Activated T-helper 2 cell treated with anti-CD3 and anti-CD28 coated beads, Interferon-gamma antibody, Interleukin-2, Interleukin-4, amounts not matched to agents 10 μg/mL and 5 μg/mL and 100 μg/mL, durations not matched to agents 14 hours and 24 hours and 36 hours (primary cell): ENCODE measurements at regions of chr11 and their contacts with region 1.

Region 1: GRCh38 chr11:59849129-59849528 is 3.8 kb upstream of the CBLIF start:
- DNase-seq: no peak
- H3K4me3 Mint-ChIP-seq: no peak overlapping the region
- H3K27ac Mint-ChIP-seq: no peak overlapping the region
- H3K4me1 Mint-ChIP-seq: peaks cover 5% of the 10 kb centered on the region
- H3K27me3 Mint-ChIP-seq: no peaks in the 10 kb centered on the region

Region 2: DNA sequence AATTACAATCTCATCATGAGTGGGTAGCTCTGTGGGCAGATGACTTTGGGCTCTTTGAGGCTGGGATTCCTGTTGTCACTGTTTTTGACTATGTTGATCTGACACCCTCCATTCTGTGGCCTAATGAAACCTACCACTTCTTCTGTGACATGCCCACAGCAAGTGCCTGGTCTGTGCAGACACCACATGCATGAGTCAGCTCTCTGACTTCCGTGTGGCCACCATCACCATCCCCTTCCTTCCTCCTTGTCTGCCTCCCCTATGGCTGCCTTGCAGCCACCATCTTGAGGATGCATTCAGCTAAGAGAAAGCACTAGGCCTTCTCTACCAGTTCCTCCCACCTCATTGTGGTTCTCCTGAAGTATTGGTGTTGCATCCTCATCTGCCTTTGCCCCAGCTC is 120.2 kb before region 1 on chr11:
- intact Hi-C with region 1: no loop called
- DNase-seq: no peak
- H3K4me3 Mint-ChIP-seq: no peak overlapping the region
- H3K27ac Mint-ChIP-seq: no peak overlapping the region
- H3K4me1 Mint-ChIP-seq: peaks cover 9% of the 10 kb centered on the region
- H3K27me3 Mint-ChIP-seq: no peaks in the 10 kb centered on the region

Region 3: GRCh38 chr11:59822989-59823566 is 26.1 kb before region 1 on chr11:
- intact Hi-C with region 1: no loop called
- DNase-seq: no peak
- H3K4me3 Mint-ChIP-seq: no peak overlapping the region
- H3K27ac Mint-ChIP-seq: no peak overlapping the region
- H3K4me1 Mint-ChIP-seq: peaks cover 15% of the 10 kb centered on the region
- H3K27me3 Mint-ChIP-seq: no peaks in the 10 kb centered on the region

Region 4: GRCh38 chr11:59875856-59876519 is 26.9 kb after region 1 on chr11:
- intact Hi-C with region 1: loop called (anchors 2 kb)
- DNase-seq: no peak
- H3K4me3 Mint-ChIP-seq: no peak overlapping the region
- H3K27ac Mint-ChIP-seq: no peak overlapping the region
- H3K4me1 Mint-ChIP-seq: peaks cover 8% of the 10 kb centered on the region
- H3K27me3 Mint-ChIP-seq: peaks cover 9% of the 10 kb centered on the region